ENCODE measurements at regions of chr6 and their contacts with region 1.

Region 1: DNA sequence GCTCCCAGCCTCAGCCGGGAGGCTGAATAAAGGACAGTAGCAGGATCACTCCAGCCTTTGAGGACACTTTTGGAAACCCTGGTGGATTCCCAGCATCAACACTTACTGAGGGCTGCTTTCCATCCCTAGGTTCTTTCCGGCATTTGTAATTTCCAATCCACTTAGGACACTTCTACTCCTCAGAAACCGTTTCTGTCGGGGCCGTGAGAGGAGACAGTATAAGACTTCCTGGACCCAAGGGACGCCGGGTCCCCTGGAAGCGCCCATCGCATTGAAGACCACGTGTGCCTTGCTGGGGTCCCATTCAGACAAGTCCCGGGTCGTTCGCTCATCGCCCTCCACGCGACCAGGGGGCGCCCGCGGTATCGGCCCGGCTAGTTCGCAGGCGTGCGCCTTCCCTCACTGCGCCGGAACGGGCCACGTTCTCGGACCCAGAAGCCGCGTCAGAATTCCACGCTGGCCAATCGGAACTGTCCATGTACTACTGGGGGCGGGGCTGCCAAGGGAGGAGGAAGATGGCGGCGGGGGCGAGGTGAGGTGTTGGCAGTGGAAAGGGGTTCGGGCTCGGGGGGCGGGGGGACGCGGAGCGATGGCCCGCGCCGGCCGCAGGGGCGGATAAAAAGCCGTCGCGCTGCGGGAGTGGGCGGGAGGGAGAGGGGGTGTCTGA is at the start of gene NUS1:
- DNase-seq: peak; percentile 98
- H3K4me3 Mint-ChIP-seq: peak within 1 kb of the TSS; percentile 94
- H3K27ac Mint-ChIP-seq: peak within 1 kb of the TSS; percentile 93
- H3K4me1 Mint-ChIP-seq: peaks cover 46% of the 10 kb centered on the region
- H3K27me3 Mint-ChIP-seq: no peaks in the 10 kb centered on the region
- total RNA-seq, gene NUS1: 24.0 to 24.1 TPM

Region 2: GRCh38 chr6:116253505-116254296 is 1421.4 kb before region 1 on chr6 and contains the start of gene TSPYL4:
- CTCF ChIA-PET with region 1: no interaction called
- intact Hi-C with region 1: loop called (anchors 10 kb)
- DNase-seq: peak; percentile 95
- H3K4me3 Mint-ChIP-seq: no peak within 1 kb of the TSS
- H3K27ac Mint-ChIP-seq: no peak within 1 kb of the TSS
- H3K4me1 Mint-ChIP-seq: peaks cover 35% of the 10 kb centered on the region
- H3K27me3 Mint-ChIP-seq: no peaks in the 10 kb centered on the region
- total RNA-seq, gene TSPYL4: 7.8 to 8.0 TPM

Region 3: GRCh38 chr6:116680975-116681808 is 993.9 kb before region 1 on chr6 and contains the start of gene KPNA5:
- CTCF ChIA-PET with region 1: no interaction called
- intact Hi-C with region 1: loop called (anchors 5 kb)
- DNase-seq: peak; percentile 94
- H3K4me3 Mint-ChIP-seq: peak within 1 kb of the TSS; percentile 96
- H3K27ac Mint-ChIP-seq: peak within 1 kb of the TSS; percentile 97
- H3K4me1 Mint-ChIP-seq: peaks cover 43% of the 10 kb centered on the region
- H3K27me3 Mint-ChIP-seq: no peaks in the 10 kb centered on the region
- total RNA-seq, gene KPNA5: 8.4 to 8.9 TPM

Region 4: DNA sequence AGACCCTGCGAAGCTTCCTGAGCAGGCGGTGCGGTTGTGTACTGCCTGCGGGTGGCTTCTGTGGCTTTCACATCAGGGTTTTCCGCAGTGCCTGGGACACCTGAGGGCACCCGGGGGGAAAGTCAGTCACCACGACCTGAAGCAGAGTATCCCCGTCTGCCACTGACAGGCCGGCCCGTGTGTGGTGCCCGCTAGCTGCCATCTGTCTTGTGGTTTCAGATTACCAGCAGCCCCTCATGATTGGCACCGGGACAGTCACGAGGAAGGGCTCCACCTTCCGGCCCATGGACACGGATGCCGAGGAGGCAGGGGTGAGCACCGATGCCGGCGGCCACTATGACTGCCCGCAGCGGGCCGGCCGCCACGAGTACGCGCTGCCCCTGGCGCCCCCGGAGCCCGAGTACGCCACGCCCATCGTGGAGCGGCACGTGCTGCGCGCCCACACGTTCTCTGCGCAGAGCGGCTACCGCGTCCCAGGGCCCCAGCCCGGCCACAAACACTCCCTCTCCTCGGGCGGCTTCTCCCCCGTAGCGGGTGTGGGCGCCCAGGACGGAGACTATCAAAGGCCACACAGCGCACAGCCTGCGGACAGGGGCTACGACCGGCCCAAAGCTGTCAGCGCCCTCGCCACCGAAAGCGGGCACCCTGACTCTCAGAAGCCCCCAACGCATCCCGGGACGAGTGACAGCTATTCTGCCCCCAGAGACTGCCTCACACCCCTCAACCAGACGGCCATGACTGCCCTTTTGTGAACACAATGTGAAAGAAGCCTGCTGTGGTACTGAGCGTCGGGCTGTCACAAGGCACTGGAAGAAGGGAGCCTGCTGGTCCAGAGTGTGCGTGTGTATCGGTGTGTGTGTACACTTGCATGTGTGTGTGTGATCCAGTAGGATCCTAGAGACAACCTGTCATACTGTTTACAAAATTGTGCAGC is 127.2 kb before region 1 on chr6:
- CTCF ChIA-PET with region 1: no interaction called
- intact Hi-C with region 1: loop called (anchors 2 kb)
- DNase-seq: peak; percentile 52
- H3K4me3 Mint-ChIP-seq: peak overlapping the region; percentile 67
- H3K27ac Mint-ChIP-seq: no peak overlapping the region
- H3K4me1 Mint-ChIP-seq: peaks cover 37% of the 10 kb centered on the region
- H3K27me3 Mint-ChIP-seq: peaks cover 6% of the 10 kb centered on the region

Region 5: DNA sequence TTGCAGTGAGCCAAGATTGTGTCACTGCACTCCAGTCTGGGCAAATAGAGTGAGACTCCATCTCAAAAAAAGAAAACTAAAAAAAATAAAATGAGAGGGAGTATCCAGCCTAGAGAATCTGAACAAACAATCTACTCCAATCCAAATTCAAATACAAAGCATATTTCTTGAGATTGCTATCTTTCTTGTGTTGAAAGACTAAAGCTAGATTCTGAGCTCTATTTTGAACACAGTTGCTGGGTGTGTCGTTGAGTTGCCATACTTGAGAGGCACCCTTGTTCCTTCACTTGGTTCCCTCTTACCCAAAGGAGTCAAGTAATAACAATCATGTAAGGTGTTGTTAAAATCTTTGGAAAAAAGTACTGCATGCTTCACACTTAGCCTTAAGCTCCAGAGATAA is 64.9 kb before region 1 on chr6:
- CTCF ChIA-PET with region 1: no interaction called
- intact Hi-C with region 1: no loop called
- DNase-seq: no peak
- H3K4me3 Mint-ChIP-seq: no peak overlapping the region
- H3K27ac Mint-ChIP-seq: no peak overlapping the region
- H3K4me1 Mint-ChIP-seq: peaks cover 12% of the 10 kb centered on the region
- H3K27me3 Mint-ChIP-seq: peaks cover 13% of the 10 kb centered on the region

Region 6: GRCh38 chr6:118042855-118043254 is 367.7 kb after region 1 on chr6:
- CTCF ChIA-PET with region 1: no interaction called
- intact Hi-C with region 1: no loop called
- DNase-seq: no peak
- H3K4me3 Mint-ChIP-seq: no peak overlapping the region
- H3K27ac Mint-ChIP-seq: no peak overlapping the region
- H3K4me1 Mint-ChIP-seq: no peaks in the 10 kb centered on the region
- H3K27me3 Mint-ChIP-seq: peaks cover 19% of the 10 kb centered on the region

Region 7: DNA sequence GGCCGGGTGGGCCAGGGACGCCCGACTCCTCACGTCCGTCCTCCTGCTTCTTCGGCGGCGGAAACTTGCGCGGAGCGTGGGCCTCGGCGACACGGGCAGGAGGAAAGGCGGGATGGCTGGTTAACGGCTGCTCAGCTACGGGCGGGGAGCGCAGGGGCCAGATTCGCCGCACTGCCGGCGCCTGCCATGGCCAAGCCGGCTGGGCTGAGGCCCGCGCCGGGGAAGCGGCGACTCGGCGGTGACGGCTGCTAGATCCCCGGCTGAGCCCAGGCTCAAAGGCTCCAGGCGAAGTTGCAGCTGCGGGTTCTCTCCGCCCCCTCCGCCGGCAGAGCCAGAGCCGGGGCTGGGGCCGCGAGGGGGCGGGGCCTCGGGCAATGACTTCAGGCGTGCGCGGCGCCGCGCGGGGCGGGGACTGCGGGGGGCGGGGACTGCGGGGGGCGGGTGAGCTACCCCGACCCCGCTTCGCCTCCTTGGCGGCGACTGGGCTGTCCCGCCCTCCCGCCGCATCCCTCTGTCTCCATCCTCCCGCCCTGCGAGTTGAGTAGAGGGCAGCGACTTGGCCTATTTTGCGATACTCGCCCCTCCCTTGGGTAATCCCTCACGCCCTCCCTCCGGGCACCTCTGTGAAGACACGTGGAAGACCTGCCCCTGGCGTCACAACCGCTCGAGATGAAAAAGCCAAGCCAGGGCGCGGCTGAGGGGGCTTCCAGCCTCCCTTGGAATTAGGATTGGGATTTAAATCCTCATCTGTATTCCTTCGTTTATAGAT is 976.3 kb after region 1 on chr6 and contains the start of gene CEP85L:
- CTCF ChIA-PET with region 1: no interaction called
- intact Hi-C with region 1: loop called (anchors 10 kb)
- DNase-seq: peak; percentile 90
- H3K4me3 Mint-ChIP-seq: peak within 1 kb of the TSS; percentile 86
- H3K27ac Mint-ChIP-seq: peak within 1 kb of the TSS; percentile 89
- H3K4me1 Mint-ChIP-seq: peaks cover 49% of the 10 kb centered on the region
- H3K27me3 Mint-ChIP-seq: no peaks in the 10 kb centered on the region
- total RNA-seq, gene CEP85L: 31.4 to 31.9 TPM

Measured in activated naive CD4-positive, alpha-beta T cell treated with anti-CD3 and anti-CD28 coated beads for 36 hours (primary cell).